SK-N-SH (cell line): ENCODE measurements at regions of chr7 and their contacts with region 1.

Region 1: GRCh38 chr7:116236020-116236630 is 25.8 kb downstream of the TES start:
- DNase-seq: peak; percentile 35
- H3K4me3 ChIP-seq: no peak overlapping the region
- H3K27ac ChIP-seq: no peak overlapping the region
- H3K4me1 ChIP-seq: peaks cover 18 to 19% of the 10 kb centered on the region in 2 experiments; a peak in 3 of 4 replicates
- H3K27me3 ChIP-seq: no peaks in the 10 kb centered on the region
- CTCF ChIP-seq: peak; percentile 95
- EP300 ChIP-seq: no peak
- RAD21 ChIP-seq: peak; percentile 93

Region 2: GRCh38 chr7:116165717-116166116 is 70.4 kb before region 1 on chr7:
- CTCF ChIA-PET with region 1: interaction called, 95 read pairs
- POLR2A ChIA-PET with region 1: no interaction called
- DNase-seq: no peak
- H3K4me3 ChIP-seq: no peak overlapping the region
- H3K27ac ChIP-seq: no peak overlapping the region
- H3K4me1 ChIP-seq: no peaks in the 10 kb centered on the region
- H3K27me3 ChIP-seq: peaks cover 72% of the 10 kb centered on the region
- CTCF ChIP-seq: no peak
- EP300 ChIP-seq: no peak
- RAD21 ChIP-seq: no peak

Region 3: GRCh38 chr7:116185956-116186355 is 50.2 kb before region 1 on chr7:
- CTCF ChIA-PET with region 1: interaction called, 428 read pairs
- POLR2A ChIA-PET with region 1: no interaction called
- DNase-seq: no peak
- H3K4me3 ChIP-seq: no peak overlapping the region
- H3K27ac ChIP-seq: no peak overlapping the region
- H3K4me1 ChIP-seq: no peaks in the 10 kb centered on the region
- H3K27me3 ChIP-seq: no peaks in the 10 kb centered on the region
- CTCF ChIP-seq: no peak
- EP300 ChIP-seq: no peak
- RAD21 ChIP-seq: no peak

Region 4: GRCh38 chr7:116211006-116211912 is 24.9 kb before region 1 on chr7:
- CTCF ChIA-PET with region 1: interaction called, 75 read pairs
- POLR2A ChIA-PET with region 1: interaction called, 5 read pairs
- DNase-seq: peak; percentile 68
- H3K4me3 ChIP-seq: peak overlapping the region; percentile 57 to 61
- H3K27ac ChIP-seq: peak overlapping the region in 1 of 2 experiments; percentile 87; a peak in 2 of 4 replicates
- H3K4me1 ChIP-seq: peaks cover 0 to 30% of the 10 kb centered on the region in 2 experiments; a peak in 2 of 4 replicates
- H3K27me3 ChIP-seq: peaks cover 57% of the 10 kb centered on the region
- CTCF ChIP-seq: no peak
- EP300 ChIP-seq: peak in 1 of 2 experiments; percentile 18; a peak in 1 of 4 replicates
- RAD21 ChIP-seq: no peak

Region 5: DNA sequence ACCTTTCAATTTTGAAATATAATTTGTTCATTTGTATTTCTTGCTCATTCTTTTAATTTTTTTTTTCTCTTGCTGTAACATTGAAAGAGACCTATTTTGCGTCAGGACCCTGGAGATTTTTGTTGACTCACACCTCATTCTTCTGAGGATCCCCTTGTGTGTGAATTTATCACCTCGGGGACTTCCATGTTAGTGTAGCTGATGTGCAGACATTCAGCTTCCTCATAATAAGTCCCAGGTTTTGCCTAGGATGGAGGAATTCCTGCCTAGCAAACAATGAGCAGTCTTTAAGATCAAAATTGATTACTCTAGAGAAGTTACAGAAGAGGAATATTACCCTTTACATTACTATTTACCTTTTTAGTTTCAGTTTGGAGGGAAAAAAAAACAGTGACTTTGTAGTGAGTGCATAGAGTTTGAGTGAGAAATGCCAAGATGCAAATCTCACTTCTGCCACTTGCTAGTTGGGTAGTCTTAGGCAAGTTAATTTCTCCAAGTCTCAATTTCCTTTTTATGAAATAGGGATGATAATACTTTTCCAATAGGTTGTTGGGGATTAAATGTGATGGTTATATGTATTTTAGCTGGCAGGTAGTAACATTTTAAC is 11.5 kb before region 1 on chr7:
- CTCF ChIA-PET with region 1: interaction called, 28 read pairs
- POLR2A ChIA-PET with region 1: no interaction called
- DNase-seq: no peak
- H3K4me3 ChIP-seq: no peak overlapping the region
- H3K27ac ChIP-seq: peak overlapping the region in 1 of 2 experiments; percentile 39; a peak in 1 of 4 replicates
- H3K4me1 ChIP-seq: peaks cover 26 to 63% of the 10 kb centered on the region in 2 experiments; a peak in 3 of 4 replicates
- H3K27me3 ChIP-seq: peaks cover 10% of the 10 kb centered on the region; the same call in 1 of the 2 replicates
- CTCF ChIP-seq: no peak
- EP300 ChIP-seq: no peak
- RAD21 ChIP-seq: no peak

Region 6: DNA sequence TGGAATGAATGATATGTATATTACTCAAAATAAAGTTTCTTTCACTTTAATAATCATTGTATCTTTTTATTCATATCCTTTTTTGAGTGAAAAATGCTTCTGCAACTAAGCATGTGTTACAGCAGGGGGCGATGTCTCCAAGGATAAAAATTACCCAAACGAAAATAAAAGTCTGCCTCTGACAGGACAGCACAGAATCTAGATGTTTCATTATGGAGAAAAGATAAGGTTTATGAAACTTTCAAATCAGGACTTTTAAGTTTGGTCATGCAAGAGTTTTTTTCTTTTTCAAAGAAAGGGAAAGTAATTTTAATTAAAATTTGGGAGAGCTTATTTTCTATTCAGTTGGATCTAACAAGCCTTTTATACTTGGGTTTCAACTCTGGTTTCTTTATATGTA is 22.6 kb after region 1 on chr7:
- CTCF ChIA-PET with region 1: interaction called, 129 read pairs
- POLR2A ChIA-PET with region 1: interaction called, 3 read pairs
- DNase-seq: peak; percentile 32
- H3K4me3 ChIP-seq: peak overlapping the region in 1 of 2 experiments; percentile 4; a peak in 1 of 4 replicates
- H3K27ac ChIP-seq: peak overlapping the region; percentile 31 to 43; a peak in 3 of 4 replicates
- H3K4me1 ChIP-seq: peaks cover 0 to 12% of the 10 kb centered on the region in 2 experiments; a peak in 2 of 4 replicates
- H3K27me3 ChIP-seq: no peaks in the 10 kb centered on the region
- CTCF ChIP-seq: peak; percentile 99
- EP300 ChIP-seq: no peak
- RAD21 ChIP-seq: peak; percentile 87